ENCODE measurements at regions of chr19 and their contacts with region 1.

Region 1: DNA sequence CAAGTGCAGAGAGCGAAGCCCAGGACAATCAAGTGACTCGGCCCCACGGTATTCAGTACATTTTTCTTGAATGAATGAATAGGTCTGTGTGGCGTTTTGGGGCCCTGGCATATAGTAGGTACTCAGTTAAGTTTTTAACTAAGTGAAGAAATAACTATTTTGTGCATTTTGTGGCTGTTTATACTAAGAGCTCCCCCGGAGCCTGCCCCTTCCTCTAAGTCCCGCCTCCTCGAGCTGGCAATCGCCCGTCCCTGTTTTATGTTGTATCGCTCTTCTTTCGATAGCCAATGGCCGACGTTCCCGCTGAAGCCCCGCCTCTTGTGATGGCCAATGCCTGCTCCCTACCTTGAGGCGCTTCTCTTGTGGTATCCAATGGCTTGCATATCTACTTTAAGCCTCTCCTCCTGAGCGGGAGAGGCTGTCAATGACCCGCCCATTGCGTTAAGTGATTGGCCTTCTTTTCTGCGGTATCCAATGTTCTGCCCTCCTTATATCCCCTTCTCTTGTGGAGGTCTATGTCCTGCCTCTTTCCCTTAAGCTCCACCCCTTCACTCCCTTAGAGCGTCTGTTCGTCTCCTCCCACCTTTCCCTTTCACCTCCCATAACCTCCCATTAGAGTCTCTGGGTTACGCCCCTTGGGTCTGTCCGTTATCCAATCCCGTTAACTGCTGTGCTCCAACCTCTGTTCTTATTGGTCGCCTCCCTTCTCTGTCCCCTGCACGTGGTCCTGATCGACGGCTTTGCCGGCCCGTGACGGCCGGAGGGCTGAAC is 509 bp upstream of the HDGFL2 start:
- DNase-seq: peak; percentile 83 to 99 (median 98)
- ATAC-seq: peak; percentile 86
- H3K4me3 Mint-ChIP-seq: no peak overlapping the region
- H3K27ac Mint-ChIP-seq: no peak overlapping the region
- H3K4me1 Mint-ChIP-seq: peaks cover 15 to 27% (median 26%) of the 10 kb centered on the region in 4 donors
- H3K27me3 Mint-ChIP-seq: no peaks in the 10 kb centered on the region

Region 2: DNA sequence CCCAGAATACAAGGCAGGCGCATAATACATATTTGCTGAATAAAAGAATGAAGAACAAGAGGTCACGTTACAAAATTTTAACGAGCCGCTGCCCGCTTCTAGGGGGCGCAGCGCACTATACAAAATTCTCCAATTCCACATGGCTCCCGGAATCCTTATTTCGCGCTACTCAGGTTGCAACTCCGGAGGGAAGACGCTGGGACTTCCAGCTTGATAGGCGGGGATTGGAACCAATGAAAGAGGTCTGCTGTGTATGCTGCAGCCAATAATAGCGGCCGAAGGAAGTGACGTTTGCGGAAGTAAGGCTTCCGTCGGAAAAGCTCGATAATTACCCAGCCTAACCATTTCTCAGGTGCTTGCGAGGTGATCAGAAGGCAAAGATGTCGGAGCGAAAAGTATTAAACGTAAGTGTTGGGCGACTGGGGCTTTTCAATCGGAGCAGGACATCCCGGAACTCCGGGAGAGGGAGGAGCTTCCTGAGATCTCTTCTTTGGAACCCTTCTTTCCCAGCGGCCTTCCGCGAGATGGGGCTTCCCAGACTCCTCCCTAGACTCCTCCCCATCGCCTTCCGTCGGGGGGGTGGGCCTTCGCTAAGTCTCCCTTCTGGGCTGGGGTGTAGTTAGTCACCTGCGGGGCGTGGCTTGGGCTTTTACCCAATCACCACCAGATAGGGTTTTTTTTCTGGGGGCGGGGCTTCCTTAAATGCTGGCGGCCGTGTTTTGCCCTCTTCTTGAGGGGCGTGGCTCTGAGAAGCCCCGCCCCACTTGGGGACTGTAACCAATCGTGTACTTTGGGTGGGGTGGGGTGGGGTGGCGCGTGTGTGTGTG is 224.6 kb before region 1 on chr19 and contains the start of gene YJU2:
- POLR2A ChIA-PET with region 1: interaction called, 14 read pairs
- DNase-seq: peak; percentile 94 to 100 (median 99)
- ATAC-seq: peak; percentile 91 to 94
- H3K4me3 Mint-ChIP-seq: peak within 1 kb of the TSS; percentile 88 to 100 (median 97)
- H3K27ac Mint-ChIP-seq: peak within 1 kb of the TSS; percentile 95 to 100 (median 99)
- H3K4me1 Mint-ChIP-seq: peaks cover 11 to 25% (median 20%) of the 10 kb centered on the region in 4 donors
- H3K27me3 Mint-ChIP-seq: peaks cover 0 to 3% (median 0%) of the 10 kb centered on the region in 5 donors
- polyA plus RNA-seq, gene YJU2: 20.2 to 35.3 (median 28.1) TPM

Region 3: DNA sequence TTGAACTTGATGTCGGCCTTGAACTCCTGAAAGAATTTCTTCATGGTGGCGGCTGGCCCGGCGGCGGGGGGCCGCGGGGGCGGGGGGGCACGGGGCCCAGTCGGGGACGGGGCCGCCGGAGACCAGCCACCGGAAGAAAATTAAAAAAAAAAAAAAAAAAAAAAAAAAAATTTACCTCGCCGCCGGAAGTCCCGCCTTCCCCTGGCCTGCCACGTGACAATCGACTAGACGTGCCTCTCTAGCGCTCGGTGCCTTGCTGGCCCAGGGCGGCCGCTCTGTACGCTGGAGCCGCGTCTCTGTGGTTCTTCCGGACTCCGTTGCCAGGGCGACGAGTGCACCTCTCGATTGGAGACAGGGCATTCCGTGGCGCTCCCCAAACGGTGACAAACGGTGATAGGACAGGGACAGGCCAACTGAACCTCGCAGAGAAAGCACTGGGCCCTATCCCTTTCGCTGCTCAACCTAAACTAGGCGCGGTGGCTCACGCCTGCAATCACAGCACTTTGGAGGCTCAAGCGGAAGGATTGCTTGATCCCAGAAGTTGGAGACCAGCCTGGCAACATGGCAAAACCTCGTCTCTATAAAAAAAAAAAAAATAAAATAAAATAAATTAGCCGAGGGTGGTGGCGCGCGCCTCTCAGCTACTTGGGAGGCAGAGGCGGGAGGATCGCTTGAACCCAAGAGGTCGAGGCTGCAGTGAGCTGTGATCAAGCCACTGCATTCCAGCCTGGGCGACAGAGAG is 13.8 kb before region 1 on chr19 and contains the start of gene UBXN6:
- POLR2A ChIA-PET with region 1: interaction called, 50 read pairs
- DNase-seq: peak; percentile 94 to 99 (median 98)
- ATAC-seq: peak; percentile 91 to 98
- H3K4me3 Mint-ChIP-seq: peak within 1 kb of the TSS; percentile 82 to 96 (median 92)
- H3K27ac Mint-ChIP-seq: peak within 1 kb of the TSS; percentile 89 to 98 (median 94)
- H3K4me1 Mint-ChIP-seq: peaks cover 14 to 26% (median 15%) of the 10 kb centered on the region in 4 donors
- H3K27me3 Mint-ChIP-seq: peaks cover 0 to 1% (median 0%) of the 10 kb centered on the region in 5 donors
- polyA plus RNA-seq, gene UBXN6: 2.4 to 6.6 (median 3.9) TPM

Region 4: GRCh38 chr19:4534836-4535658 is 63.5 kb after region 1 on chr19 and contains the start of gene PLIN5:
- POLR2A ChIA-PET with region 1: no interaction called
- DNase-seq: peak in 9 of 10 donors; percentile 32 to 83 (median 54)
- ATAC-seq: peak; percentile 89 to 90
- H3K4me3 Mint-ChIP-seq: peak within 1 kb of the TSS in 8 of 10 donors; percentile 33 to 74 (median 52)
- H3K27ac Mint-ChIP-seq: peak within 1 kb of the TSS in 2 of 10 donors; percentile 37 to 43
- H3K4me1 Mint-ChIP-seq: peaks cover 4 to 12% (median 7%) of the 10 kb centered on the region in 4 donors
- H3K27me3 Mint-ChIP-seq: peaks cover 3 to 35% (median 11%) of the 10 kb centered on the region in 5 donors
- polyA plus RNA-seq, gene PLIN5: 0.28 to 0.90 (median 0.30) TPM

Measured in naive thymus-derived CD8-positive, alpha-beta T cell (primary cell).